ENCODE measurements at regions of chr5 and their contacts with region 1.

Region 1: DNA sequence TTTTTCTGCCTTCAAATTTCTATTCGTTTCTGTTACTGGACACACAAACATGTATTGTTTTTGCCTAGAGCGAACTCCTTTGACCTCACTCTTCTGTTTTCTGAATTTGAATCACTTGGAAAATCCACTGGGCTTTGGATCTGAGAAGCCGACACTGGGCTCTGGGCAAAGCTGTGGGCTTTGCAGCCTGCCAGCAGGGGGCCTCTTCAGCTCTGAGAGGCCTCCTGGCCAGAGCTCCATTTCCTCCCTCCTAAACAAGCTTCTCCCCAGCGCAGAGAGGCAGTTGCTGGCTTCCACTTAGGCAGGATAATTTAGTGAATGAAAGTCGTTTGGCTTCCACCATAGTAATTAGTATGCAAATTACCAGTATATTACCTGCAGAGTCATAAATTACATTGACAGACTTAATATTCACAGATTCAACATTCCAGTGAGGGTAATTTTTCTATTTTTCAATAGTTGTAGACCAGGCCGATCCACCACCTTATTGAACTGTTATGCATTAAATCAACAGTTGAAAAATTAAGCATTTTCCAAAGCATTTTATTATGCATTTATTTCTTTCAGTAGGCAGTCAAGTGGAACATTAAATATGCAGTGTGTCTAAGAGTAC is 104.0 kb upstream of the ZNF366 start:
- H3K4me3 ChIP-seq: no peak overlapping the region
- H3K27ac ChIP-seq: no peak overlapping the region
- H3K4me1 ChIP-seq: no peaks in the 10 kb centered on the region
- CTCF ChIP-seq: peak; percentile 66; the same call in 1 of the 2 replicates

Region 2: DNA sequence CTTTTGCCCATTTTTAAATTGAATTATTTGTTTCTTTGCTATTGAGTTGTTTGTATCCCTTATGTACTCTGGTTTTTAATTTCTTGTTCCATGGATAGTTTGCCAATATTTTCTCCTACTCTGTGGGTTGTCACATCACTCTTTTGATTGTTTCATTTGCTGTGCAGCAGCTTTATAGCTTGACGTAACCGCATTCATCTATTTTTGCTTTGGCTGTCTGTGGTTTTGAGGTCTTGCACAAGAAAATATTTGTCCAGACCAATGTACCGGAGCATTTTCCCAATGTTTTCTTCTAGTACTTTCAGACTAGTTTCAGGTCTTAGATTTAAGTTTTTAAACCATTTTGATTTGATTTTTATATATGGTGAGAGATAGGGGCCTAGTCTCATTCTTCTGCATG is 67.9 kb before region 1 on chr5:
- CTCF ChIA-PET with region 1: no interaction called
- POLR2A ChIA-PET with region 1: no interaction called
- H3K4me3 ChIP-seq: no peak overlapping the region
- H3K27ac ChIP-seq: no peak overlapping the region
- H3K4me1 ChIP-seq: no peaks in the 10 kb centered on the region
- CTCF ChIP-seq: no peak

Region 3: DNA sequence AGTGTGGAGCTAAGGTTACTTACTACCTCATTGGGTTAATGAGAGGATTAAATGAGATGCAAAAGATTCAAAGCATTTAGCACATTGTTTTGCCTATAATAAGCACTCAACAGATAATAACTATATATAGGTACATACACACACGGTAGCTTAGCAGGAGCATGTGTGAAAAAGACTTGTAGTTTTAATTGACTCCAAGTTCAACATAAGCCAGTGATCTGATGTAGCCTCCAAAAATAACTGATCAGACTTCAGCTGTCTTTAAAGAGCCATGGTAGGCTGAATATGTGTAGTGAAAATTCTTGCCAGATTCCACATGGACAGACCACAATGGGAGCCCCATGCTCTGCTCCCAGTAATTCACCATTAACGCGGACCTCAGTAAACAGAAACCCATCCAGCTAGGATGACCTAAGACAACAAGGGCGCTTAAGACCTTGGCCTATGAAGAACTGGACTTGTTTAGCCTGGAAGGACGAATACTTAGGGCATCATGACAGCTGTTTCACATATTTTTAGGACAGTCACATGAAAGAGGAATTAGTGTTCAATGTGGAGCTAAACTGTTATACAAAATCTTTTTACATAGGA is 11.0 kb after region 1 on chr5:
- CTCF ChIA-PET with region 1: interaction called, 11 read pairs
- POLR2A ChIA-PET with region 1: no interaction called
- H3K4me3 ChIP-seq: no peak overlapping the region
- H3K27ac ChIP-seq: no peak overlapping the region
- H3K4me1 ChIP-seq: no peaks in the 10 kb centered on the region
- CTCF ChIP-seq: no peak

Region 4: GRCh38 chr5:72692231-72692637 is 81.0 kb after region 1 on chr5:
- CTCF ChIA-PET with region 1: no interaction called
- POLR2A ChIA-PET with region 1: no interaction called
- H3K4me3 ChIP-seq: no peak overlapping the region
- H3K27ac ChIP-seq: no peak overlapping the region
- H3K4me1 ChIP-seq: no peaks in the 10 kb centered on the region
- CTCF ChIP-seq: no peak

Region 5: GRCh38 chr5:72733810-72734209 is 122.6 kb after region 1 on chr5:
- CTCF ChIA-PET with region 1: no interaction called
- POLR2A ChIA-PET with region 1: no interaction called
- H3K4me3 ChIP-seq: no peak overlapping the region
- H3K27ac ChIP-seq: no peak overlapping the region
- H3K4me1 ChIP-seq: no peaks in the 10 kb centered on the region
- CTCF ChIP-seq: no peak

Region 6: GRCh38 chr5:72920690-72921502 is 309.7 kb after region 1 on chr5:
- CTCF ChIA-PET with region 1: no interaction called
- POLR2A ChIA-PET with region 1: no interaction called
- H3K4me3 ChIP-seq: no peak overlapping the region
- H3K27ac ChIP-seq: no peak overlapping the region
- H3K4me1 ChIP-seq: no peaks in the 10 kb centered on the region
- CTCF ChIP-seq: peak; percentile 46

Measured in HEK293 (cell line).